Upper lobe of right lung (tissue), 1 donor: ENCODE measurements at regions of chr3 and their contacts with region 1.

Region 1: DNA sequence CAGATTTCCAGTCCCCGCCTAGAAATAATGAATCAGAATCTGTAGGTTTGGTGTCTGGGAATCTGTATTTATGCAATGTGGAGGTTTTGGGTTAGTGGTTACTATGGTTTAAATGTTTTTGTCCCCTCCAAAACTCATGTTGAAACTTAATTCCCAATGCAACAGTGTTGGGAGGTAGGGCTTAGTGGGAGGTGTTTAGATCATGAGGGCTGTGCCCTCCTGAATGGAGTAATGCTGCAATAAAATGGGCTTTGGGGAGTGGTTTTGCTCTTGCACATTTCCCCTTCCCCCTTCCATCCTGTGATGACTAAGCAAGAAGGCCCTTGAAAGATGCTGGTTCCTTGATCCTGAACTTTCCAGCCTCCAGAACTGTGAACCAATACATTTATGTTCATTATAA is 9.2 kb upstream of the RFC4 start:
- DNase-seq: no peak
- ATAC-seq: peak; percentile 68
- H3K4me3 ChIP-seq: no peak overlapping the region
- H3K27ac ChIP-seq: no peak overlapping the region
- H3K4me1 ChIP-seq: no peaks in the 10 kb centered on the region
- H3K27me3 ChIP-seq: peaks cover 6% of the 10 kb centered on the region
- CTCF ChIP-seq: no peak

Region 2: GRCh38 chr3:186614597-186615483 is 200.6 kb before region 1 on chr3:
- intact Hi-C with region 1: loop called (anchors 5 kb)
- DNase-seq: peak; percentile 71
- ATAC-seq: peak; percentile 83
- H3K4me3 ChIP-seq: no peak overlapping the region
- H3K27ac ChIP-seq: no peak overlapping the region
- H3K4me1 ChIP-seq: no peaks in the 10 kb centered on the region
- H3K27me3 ChIP-seq: peaks cover 22% of the 10 kb centered on the region
- CTCF ChIP-seq: peak; percentile 98

Region 3: GRCh38 chr3:186679151-186679550 is 136.3 kb before region 1 on chr3:
- intact Hi-C with region 1: no loop called
- DNase-seq: no peak
- ATAC-seq: no peak
- H3K4me3 ChIP-seq: no peak overlapping the region
- H3K27ac ChIP-seq: no peak overlapping the region
- H3K4me1 ChIP-seq: no peaks in the 10 kb centered on the region
- H3K27me3 ChIP-seq: no peaks in the 10 kb centered on the region
- CTCF ChIP-seq: no peak

Region 4: GRCh38 chr3:187850331-187850921 is 1035.0 kb after region 1 on chr3:
- intact Hi-C with region 1: no loop called
- DNase-seq: peak; percentile 66
- ATAC-seq: peak; percentile 74
- H3K4me3 ChIP-seq: no peak overlapping the region
- H3K27ac ChIP-seq: no peak overlapping the region
- H3K4me1 ChIP-seq: no peaks in the 10 kb centered on the region
- H3K27me3 ChIP-seq: no peaks in the 10 kb centered on the region
- CTCF ChIP-seq: no peak